ENCODE measurements at regions of chr11 and their contacts with region 1.

Region 1: DNA sequence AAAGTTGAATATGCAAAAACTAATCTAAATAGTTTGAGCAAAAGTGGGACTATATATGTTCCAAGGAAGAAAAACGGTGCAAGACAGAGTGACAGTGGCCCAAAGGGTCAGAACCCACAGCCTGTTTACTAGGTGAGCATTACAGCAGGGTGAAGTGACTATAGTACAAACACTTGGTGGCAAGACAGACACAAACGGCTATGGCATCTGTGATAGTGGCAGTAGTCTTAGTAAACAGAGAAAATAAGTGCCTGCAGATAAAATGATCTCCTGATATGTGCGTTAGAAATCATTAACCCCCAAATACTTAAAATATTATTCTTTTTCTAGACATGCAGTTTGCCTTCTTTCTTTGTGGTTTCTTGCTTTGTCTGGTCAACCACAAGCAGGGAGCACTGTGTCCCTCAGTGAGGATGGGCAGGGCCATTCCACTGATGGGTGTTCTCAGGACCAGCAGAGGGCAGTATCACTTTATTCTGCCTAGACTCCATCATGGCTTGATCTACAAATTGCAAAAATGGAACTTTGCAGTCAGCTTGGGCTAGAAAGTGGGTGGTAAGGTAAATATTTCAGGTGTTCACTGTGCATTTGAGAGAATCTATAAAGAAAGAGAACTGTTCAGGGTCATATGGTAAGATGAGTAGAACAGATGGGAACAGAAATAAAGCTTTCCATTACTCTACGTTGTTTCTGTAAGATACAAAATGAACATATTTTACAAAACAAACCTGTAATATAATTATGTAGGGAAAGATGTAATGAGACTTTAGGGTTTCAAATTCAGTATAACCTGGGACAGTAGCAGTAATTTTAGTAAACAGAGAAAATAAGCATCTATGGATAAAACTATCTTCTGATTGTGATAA is 198.2 kb downstream of the SWAP70 start:
- DNase-seq: no peak
- H3K4me3 ChIP-seq: no peak overlapping the region
- H3K27ac ChIP-seq: no peak overlapping the region
- H3K4me1 ChIP-seq: peaks cover 12 to 35% (median 15%) of the 10 kb centered on the region in 6 donors
- H3K27me3 ChIP-seq: no peaks in the 10 kb centered on the region
- CTCF ChIP-seq: peak; percentile 41 to 88 (median 75)
- POLR2A ChIP-seq: no peak

Region 2: DNA sequence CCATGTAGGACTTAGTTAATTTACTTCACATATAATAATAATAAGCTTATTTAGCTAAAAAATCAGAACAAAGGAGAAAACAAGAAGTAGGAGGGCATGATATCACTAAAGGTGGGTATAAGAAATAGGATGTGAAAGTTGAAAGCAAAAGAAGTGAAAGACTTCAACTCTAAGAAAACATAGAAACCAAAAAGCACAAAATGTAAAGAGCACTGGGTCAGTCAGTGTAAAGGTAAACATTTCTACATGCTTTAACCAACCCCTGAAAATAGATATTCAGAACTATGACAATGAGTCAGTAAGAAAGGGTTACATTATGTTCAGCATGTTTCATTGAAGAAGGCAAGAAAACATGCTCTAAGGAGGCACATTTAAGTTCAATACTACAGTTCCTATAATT is 100.6 kb after region 1 on chr11:
- intact Hi-C with region 1: loop called (anchors 10 kb)
- DNase-seq: no peak
- H3K4me3 ChIP-seq: no peak overlapping the region
- H3K27ac ChIP-seq: peak overlapping the region in 2 of 8 donors; percentile 21 to 38
- H3K4me1 ChIP-seq: no peaks in the 10 kb centered on the region
- H3K27me3 ChIP-seq: no peaks in the 10 kb centered on the region
- CTCF ChIP-seq: no peak
- POLR2A ChIP-seq: no peak

Region 3: GRCh38 chr11:10004526-10005113 is 142.5 kb after region 1 on chr11:
- intact Hi-C with region 1: no loop called
- DNase-seq: no peak
- H3K4me3 ChIP-seq: no peak overlapping the region
- H3K27ac ChIP-seq: no peak overlapping the region
- H3K4me1 ChIP-seq: peaks cover 0 to 4% (median 0%) of the 10 kb centered on the region in 6 donors
- H3K27me3 ChIP-seq: no peaks in the 10 kb centered on the region
- CTCF ChIP-seq: no peak
- POLR2A ChIP-seq: no peak

Region 4: GRCh38 chr11:10322830-10323792 is 461.0 kb after region 1 on chr11:
- intact Hi-C with region 1: loop called (anchors 10 kb)
- DNase-seq: no peak
- H3K4me3 ChIP-seq: no peak overlapping the region
- H3K27ac ChIP-seq: peak overlapping the region in 1 of 8 donors; percentile 20
- H3K4me1 ChIP-seq: peaks cover 3 to 34% (median 14%) of the 10 kb centered on the region in 6 donors
- H3K27me3 ChIP-seq: no peaks in the 10 kb centered on the region
- CTCF ChIP-seq: peak in 9 of 11 experiments; percentile 19 to 68 (median 58)
- POLR2A ChIP-seq: no peak